ENCODE measurements at regions of chr6 and their contacts with region 1.

Region 1: DNA sequence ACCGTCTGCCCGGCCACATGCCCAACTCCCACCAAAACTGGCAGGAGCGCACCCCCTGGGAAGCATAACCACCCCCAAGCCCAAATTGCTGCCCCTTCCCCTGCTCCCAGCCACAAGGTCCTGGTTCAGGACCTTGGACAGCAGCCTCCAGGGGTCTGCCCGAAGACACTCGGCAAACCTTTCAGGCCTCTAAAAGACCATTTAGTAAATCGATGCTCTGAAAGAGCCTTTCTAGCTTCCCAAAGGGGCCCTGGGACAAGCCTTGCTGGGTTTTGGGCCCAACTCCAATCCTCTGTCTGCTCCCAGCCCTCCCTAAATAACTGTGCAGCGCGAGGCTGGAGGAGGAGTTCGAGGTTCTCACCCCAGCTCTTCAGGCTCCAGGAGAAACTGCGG is 30.5 kb downstream of the GRM4 start:
- DNase-seq: no peak
- H3K4me3 ChIP-seq: no peak overlapping the region
- H3K27ac ChIP-seq: no peak overlapping the region
- H3K4me1 ChIP-seq: no peaks in the 10 kb centered on the region
- H3K27me3 ChIP-seq: peaks cover 0 to 28% of the 10 kb centered on the region in 2 donors
- CTCF ChIP-seq: no peak
- POLR2A ChIP-seq: no peak

Region 2: DNA sequence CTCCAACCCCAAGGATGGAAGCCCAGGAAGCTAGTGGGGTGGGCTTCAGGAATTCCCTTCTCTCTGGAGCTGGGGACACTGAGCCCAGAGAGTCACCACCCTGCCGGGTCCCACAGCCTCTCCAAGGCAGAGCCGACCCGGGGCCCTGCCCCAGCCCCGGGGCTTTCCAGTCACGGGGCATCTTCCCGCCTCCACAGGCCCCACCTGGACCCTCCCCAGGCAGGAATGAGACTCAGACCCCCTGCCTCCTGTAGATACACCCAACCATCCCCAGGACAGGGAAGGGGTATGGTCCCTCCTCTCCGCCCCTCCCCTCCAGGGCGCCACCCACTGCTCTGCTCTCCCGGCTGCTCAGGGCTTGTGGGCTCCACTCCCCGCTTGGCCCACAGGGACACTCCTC is 22.8 kb before region 1 on chr6:
- intact Hi-C with region 1: loop called (anchors 1 kb)
- DNase-seq: no peak
- H3K4me3 ChIP-seq: no peak overlapping the region
- H3K27ac ChIP-seq: no peak overlapping the region
- H3K4me1 ChIP-seq: no peaks in the 10 kb centered on the region
- H3K27me3 ChIP-seq: peaks cover 3 to 41% of the 10 kb centered on the region in 2 donors
- CTCF ChIP-seq: no peak
- POLR2A ChIP-seq: no peak

Measured in breast epithelium (tissue), 4 donors.